ENCODE measurements at regions of chr1 and their contacts with region 1.

Region 1: DNA sequence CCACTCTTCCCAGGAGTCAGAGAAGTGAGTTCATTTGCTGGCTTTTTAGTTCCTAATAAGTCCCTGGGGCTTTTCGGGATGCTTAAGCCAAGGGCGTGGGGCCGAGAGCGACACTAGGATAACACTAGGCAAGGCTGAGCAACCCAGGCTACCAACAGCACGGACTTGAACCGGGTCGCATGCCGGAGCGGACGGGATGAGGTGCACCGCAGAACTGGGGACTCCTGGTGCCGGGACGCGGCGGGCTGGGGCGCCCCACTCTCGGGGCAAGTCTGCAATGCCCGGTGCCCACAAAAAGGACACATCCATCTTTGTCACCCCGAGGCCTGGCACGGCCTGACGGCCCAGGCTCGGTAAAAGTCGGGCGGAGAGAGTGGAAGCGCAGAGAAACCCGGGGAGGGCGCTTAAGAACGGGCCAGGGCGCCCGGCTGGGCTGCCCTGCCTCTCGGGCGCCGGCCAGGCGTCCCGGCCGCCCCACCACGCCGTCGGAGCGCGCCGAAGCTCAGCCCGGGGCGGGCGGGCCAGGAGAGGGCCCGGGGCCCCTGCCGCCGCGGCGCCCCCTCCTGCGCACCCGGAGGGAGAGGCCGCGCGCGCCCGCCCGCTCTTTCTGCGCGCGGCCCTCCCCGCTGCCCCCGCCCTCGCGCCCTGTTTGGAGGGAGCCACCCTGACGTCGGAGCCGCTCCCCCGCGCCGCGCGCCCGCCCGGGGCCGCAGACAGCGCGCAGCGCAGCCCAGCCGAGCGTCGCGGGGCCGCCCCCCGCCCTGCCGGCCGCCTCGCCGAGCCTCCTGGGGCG is at the start of gene NBL1:
- DNase-seq: peak; percentile 83 to 84
- ATAC-seq: peak; percentile 60 to 90 (median 74)
- H3K4me3 ChIP-seq: peak within 1 kb of the TSS; percentile 44 to 88 (median 72)
- H3K27ac ChIP-seq: peak within 1 kb of the TSS; percentile 78 to 96 (median 92)
- H3K4me1 ChIP-seq: peaks cover 5 to 58% (median 41%) of the 10 kb centered on the region in 9 donors
- H3K27me3 ChIP-seq: peaks cover 0 to 42% (median 0%) of the 10 kb centered on the region in 7 donors
- CTCF ChIP-seq: no peak
- total RNA-seq, gene NBL1: 18.5 to 48.7 (median 35.1) TPM

Region 2: GRCh38 chr1:19390901-19391595 is 252.8 kb before region 1 on chr1:
- intact Hi-C with region 1: loop called in 1 of 10 experiments (anchors 5 kb)
- DNase-seq: peak; percentile 53 to 73
- ATAC-seq: peak in 7 of 8 donors; percentile 30 to 66 (median 58)
- H3K4me3 ChIP-seq: peak overlapping the region in 6 of 10 donors; percentile 22 to 39 (median 26)
- H3K27ac ChIP-seq: peak overlapping the region; percentile 2 to 87 (median 70)
- H3K4me1 ChIP-seq: peaks cover 16 to 87% (median 59%) of the 10 kb centered on the region in 9 donors
- H3K27me3 ChIP-seq: no peaks in the 10 kb centered on the region
- CTCF ChIP-seq: peak; percentile 56 to 94 (median 78)

Region 3: GRCh38 chr1:19504796-19505692 is 138.8 kb before region 1 on chr1:
- intact Hi-C with region 1: loop called in 1 of 10 experiments (anchors 5 kb)
- DNase-seq: peak in 1 of 2 donors; percentile 44
- ATAC-seq: peak; percentile 72 to 91 (median 82)
- H3K4me3 ChIP-seq: peak overlapping the region in 3 of 10 donors; percentile 2 to 16 (median 2)
- H3K27ac ChIP-seq: peak overlapping the region; percentile 62 to 91 (median 84)
- H3K4me1 ChIP-seq: peaks cover 9 to 71% (median 45%) of the 10 kb centered on the region in 9 donors
- H3K27me3 ChIP-seq: no peaks in the 10 kb centered on the region
- CTCF ChIP-seq: no peak

Region 4: DNA sequence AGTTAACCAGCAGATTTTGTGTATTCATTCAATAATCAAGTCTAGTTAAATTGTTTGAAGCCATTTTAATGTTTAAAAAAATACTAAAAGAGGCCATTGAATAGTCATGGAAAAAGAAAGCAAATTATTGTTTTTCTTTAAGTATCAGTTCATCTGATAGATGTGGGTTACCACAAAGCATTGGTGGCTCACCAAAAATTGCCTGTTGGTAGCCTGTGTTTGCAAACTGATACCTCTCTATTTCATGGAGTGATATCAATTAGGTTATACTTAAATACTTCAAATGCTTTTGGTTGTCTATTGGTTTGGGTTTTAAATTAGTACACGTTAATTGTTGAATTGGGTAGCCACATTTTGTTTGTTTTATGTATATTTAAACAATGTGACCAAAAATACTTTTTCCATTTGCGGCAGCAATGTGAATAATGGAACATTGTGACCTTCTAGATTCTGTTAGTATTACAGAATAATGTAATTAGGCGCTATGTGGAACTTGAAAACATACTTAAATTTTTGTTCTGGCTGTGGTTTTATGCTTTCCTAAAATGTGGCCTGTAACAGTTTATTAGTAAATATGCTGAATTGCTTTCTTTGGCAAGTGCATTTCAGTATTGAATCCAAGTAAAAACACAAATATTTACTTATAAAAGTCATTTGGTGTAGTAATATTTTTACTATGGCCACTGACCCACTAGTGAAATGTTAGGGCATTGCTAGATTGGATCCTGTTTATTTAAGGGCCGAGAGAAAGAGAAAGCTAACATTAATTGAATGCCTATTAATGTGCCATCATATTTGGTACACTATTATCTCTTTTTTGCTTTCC is 36.8 kb before region 1 on chr1:
- intact Hi-C with region 1: loop called in 1 of 10 experiments (anchors 5 kb)
- DNase-seq: no peak
- ATAC-seq: no peak
- H3K4me3 ChIP-seq: no peak overlapping the region
- H3K27ac ChIP-seq: peak overlapping the region in 3 of 10 donors; percentile 2 to 36 (median 16)
- H3K4me1 ChIP-seq: peaks cover 3 to 83% (median 44%) of the 10 kb centered on the region in 9 donors
- H3K27me3 ChIP-seq: no peaks in the 10 kb centered on the region
- CTCF ChIP-seq: no peak